ENCODE measurements at regions of chr1 and their contacts with region 1.

Region 1: GRCh38 chr1:171313835-171314320 is at the start of gene FMO4:
- DNase-seq: peak; percentile 92
- H3K4me3 Mint-ChIP-seq: peak within 1 kb of the TSS; percentile 71
- H3K27ac Mint-ChIP-seq: peak within 1 kb of the TSS; percentile 69
- H3K4me1 Mint-ChIP-seq: peaks cover 14% of the 10 kb centered on the region
- H3K27me3 Mint-ChIP-seq: no peaks in the 10 kb centered on the region
- total RNA-seq, gene FMO4: 2.0 to 2.1 TPM

Region 2: DNA sequence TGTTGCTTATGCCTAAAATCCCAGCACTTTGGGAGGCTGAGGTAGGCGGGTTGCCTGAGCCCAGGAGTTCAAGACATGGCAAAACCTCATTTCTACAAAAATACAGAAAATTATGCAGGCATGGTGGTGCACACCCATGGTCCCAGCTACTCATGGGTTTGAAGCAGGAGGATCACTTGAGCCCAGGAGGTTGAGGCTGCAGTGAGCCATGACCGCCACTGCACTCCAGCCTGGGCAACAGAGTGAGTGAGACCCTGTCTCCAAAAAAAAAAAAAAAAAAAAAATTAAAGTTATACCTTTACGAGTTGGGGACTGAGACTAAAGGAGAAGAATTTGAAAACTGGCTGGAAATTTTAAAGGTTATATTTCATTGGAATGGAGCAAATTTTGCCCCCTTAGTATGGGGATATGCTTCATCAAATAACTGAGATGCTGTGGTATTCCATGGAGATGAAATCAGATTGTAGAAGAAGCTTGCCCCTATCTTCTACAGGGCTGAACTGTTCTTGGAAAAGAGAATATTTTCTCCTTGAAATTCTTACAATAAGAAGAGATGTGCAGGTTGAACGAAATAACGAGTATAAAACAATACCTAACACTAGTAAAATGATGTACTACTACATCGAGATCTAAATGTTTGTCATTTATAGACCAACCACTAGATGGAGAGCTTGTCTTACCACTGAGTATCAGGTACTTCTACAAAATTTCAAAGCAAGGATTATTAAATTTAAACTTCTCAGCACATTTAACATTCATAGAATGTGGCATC is 1385.3 kb before region 1 on chr1:
- CTCF ChIA-PET with region 1: no interaction called
- intact Hi-C with region 1: loop called (anchors 1 kb)
- DNase-seq: no peak
- H3K4me3 Mint-ChIP-seq: no peak overlapping the region
- H3K27ac Mint-ChIP-seq: no peak overlapping the region
- H3K4me1 Mint-ChIP-seq: peaks cover 3% of the 10 kb centered on the region
- H3K27me3 Mint-ChIP-seq: no peaks in the 10 kb centered on the region

Region 3: DNA sequence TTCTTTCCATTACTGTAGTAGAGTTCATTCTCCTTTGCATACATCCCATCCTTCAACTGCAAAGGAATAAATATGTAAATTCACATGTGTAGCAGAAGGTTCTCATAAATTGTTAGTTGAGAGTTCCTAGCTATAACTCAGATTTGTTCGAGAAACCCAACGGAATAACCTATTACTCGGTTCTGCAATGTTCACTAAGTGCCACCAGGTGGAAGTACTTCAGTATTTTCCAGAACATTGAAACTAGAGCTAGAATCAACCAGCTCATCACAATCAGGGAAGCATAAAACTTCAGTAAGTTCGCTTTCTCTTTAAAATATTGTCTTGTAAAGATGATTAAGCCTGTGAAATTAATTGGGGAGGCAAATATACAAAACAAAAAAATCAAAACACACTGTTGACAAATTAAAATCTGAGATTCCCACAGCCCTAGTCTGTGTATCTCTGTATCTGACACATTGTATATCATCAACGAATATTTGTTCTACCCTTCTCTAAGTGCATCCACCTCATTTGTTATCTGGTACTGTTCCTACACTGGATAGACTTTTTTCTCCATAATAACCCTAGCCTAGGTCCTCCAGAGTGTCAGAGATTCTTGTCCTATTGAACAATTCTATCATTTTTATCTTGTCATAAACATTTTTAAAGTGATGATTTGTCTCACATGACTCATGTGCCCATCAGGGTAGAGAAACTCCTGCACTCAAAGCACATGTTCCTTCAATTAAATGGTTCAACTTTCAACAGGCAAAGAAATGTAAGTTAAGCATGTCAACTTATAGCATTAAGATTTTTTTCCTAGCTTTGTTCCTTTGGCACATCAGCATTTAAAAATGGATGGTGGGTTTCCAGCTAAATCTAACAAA is 346.6 kb before region 1 on chr1:
- CTCF ChIA-PET with region 1: interaction called, 29 read pairs
- intact Hi-C with region 1: loop called (anchors 1 kb)
- DNase-seq: peak; percentile 5
- H3K4me3 Mint-ChIP-seq: no peak overlapping the region
- H3K27ac Mint-ChIP-seq: no peak overlapping the region
- H3K4me1 Mint-ChIP-seq: no peaks in the 10 kb centered on the region
- H3K27me3 Mint-ChIP-seq: peaks cover 30% of the 10 kb centered on the region

Region 4: DNA sequence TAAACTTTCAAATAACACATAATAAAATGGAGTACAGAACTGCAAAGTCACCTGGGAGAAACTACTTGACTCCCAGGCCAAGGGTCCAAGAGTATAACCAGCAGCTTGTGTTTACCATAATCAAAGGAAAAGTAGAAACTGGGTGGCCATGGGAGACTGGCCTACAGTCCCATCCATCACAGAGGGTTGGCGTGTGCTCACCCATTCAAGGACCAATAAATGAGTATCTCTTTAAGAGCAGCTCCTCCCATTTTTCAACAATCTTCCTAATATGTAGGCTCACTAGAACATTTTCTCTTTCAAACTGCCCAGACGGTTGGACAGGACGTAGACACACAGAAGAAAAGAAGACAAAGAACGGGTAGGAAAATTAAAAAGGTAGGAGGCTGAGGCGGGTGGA is 223.3 kb before region 1 on chr1 and contains the start of gene FMO3:
- CTCF ChIA-PET with region 1: no interaction called
- intact Hi-C with region 1: no loop called
- DNase-seq: no peak
- H3K4me3 Mint-ChIP-seq: no peak within 1 kb of the TSS
- H3K27ac Mint-ChIP-seq: no peak within 1 kb of the TSS
- H3K4me1 Mint-ChIP-seq: no peaks in the 10 kb centered on the region
- H3K27me3 Mint-ChIP-seq: peaks cover 5% of the 10 kb centered on the region
- total RNA-seq, gene FMO3: not detected

Region 5: DNA sequence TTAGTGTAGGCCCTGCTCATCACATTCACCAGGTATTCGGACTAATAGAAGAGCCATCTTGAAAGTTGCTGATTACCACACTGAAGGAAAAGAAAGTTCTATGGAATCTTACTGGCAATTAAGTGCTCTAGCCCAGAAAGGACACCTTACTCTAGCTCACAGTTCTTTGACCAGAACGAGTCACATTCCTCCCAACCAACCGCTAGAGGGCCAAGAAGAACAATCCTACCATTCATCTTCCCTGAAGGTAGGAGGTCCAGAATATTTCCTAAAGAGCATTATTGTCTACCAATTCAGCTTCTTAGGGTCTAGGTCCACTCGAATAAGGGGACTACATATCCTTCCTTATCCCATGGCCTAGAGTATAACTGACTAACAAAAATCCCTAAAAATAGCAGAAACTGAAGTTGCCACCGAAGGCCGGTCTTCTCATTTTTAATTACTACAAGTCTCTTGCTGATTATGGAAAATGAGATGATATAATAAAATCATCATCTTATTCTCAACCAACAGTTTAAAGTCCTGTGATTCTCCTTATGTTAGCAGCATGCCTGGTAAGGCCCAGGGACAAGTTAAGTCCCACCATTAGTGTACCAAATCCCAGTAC is 68.3 kb before region 1 on chr1:
- CTCF ChIA-PET with region 1: interaction called, 96 read pairs
- intact Hi-C with region 1: loop called (anchors 1 kb)
- DNase-seq: peak; percentile 31
- H3K4me3 Mint-ChIP-seq: no peak overlapping the region
- H3K27ac Mint-ChIP-seq: no peak overlapping the region
- H3K4me1 Mint-ChIP-seq: no peaks in the 10 kb centered on the region
- H3K27me3 Mint-ChIP-seq: peaks cover 21% of the 10 kb centered on the region

Region 6: DNA sequence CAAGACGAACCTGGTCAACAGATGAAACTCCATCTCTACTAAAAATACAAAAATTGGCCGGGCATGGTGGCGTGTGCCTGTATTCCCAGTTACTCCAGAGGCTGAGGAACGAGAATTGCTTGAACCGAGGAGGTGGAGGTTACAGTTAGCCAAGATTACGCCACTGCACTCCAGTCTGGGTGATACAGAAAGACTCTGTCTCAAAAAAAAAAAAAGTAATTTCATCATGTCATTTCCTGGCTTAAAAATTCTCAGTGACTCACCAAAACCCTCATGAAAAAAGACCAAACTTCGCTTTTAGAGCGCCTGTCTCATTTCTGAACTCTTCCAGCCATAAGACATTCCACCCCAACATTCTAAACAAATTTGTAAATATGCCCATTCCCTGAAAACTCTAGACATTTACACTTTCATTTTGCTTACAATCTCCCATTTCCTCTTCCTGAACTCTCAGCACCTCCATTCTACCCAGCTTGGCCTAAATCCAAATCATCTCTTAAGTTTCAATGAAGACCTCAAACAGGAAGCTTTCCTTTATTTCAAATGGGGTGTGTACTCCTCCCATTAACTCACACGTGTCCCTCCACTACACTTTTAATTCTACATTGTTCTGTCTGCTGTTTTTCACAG is 121.0 kb after region 1 on chr1:
- CTCF ChIA-PET with region 1: no interaction called
- intact Hi-C with region 1: loop called (anchors 1 kb)
- DNase-seq: peak; percentile 52
- H3K4me3 Mint-ChIP-seq: peak overlapping the region; percentile 23
- H3K27ac Mint-ChIP-seq: peak overlapping the region; percentile 87
- H3K4me1 Mint-ChIP-seq: peaks cover 18% of the 10 kb centered on the region
- H3K27me3 Mint-ChIP-seq: peaks cover 6% of the 10 kb centered on the region